ENCODE measurements at regions of chr1 and their contacts with region 1.

Region 1: GRCh38 chr1:180188091-180188506 is 33.4 kb downstream of the QSOX1 start:
- DNase-seq: peak; percentile 87
- H3K4me3 ChIP-seq: peak overlapping the region in 1 of 2 experiments; percentile 40; a peak in 1 of 4 replicates
- H3K27ac ChIP-seq: no peak overlapping the region
- H3K4me1 ChIP-seq: no peaks in the 10 kb centered on the region; a peak in 1 of 4 replicates
- H3K27me3 ChIP-seq: no peaks in the 10 kb centered on the region
- CTCF ChIP-seq: peak; percentile 73
- EP300 ChIP-seq: no peak
- RAD21 ChIP-seq: peak; percentile 87

Region 2: DNA sequence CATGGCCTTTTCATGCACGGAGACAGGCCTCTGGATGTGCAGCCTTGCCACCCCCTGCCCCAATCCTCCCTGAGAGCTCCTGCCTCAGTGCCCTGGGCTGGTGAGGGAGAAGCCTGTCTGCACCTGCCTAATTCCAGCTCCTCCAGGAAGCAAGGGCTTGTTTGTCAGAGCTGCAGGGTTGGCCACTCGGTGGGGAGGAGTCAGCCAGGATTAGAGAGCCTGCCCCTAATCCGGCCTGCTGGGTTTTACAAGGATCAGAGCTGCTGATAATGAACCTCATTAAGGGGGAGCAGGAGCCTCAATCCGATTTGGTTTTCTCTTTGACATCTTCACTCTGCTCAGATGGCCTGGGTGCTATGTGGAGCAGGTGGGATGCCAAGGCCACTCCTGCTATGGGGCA is 10.1 kb after region 1 on chr1:
- CTCF ChIA-PET with region 1: interaction called, 18 read pairs
- POLR2A ChIA-PET with region 1: no interaction called
- DNase-seq: no peak
- H3K4me3 ChIP-seq: no peak overlapping the region
- H3K27ac ChIP-seq: no peak overlapping the region
- H3K4me1 ChIP-seq: no peaks in the 10 kb centered on the region; a peak in 1 of 4 replicates
- H3K27me3 ChIP-seq: no peaks in the 10 kb centered on the region
- CTCF ChIP-seq: no peak
- EP300 ChIP-seq: no peak
- RAD21 ChIP-seq: no peak

Region 3: DNA sequence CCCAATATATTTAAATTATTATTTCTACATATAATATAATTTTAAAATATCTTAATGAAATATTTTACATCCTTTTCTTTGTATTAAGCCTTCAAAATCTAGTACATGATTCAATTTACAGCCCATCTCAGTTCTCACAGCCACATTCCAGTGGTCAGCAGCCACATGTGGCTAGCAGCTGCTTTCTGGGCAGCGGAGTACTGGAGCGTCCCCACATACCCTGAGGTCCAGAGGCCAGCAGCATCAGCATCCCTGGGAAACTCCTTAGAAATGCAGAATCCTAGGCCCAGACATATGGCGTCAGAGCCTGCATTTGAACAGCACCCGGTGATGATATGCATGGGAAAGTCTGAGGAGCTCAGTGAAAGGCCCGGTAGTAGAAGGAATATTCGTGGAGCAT is 33.4 kb after region 1 on chr1:
- CTCF ChIA-PET with region 1: interaction called, 16 read pairs
- POLR2A ChIA-PET with region 1: no interaction called
- DNase-seq: no peak
- H3K4me3 ChIP-seq: no peak overlapping the region
- H3K27ac ChIP-seq: no peak overlapping the region
- H3K4me1 ChIP-seq: no peaks in the 10 kb centered on the region
- H3K27me3 ChIP-seq: peaks cover 29% of the 10 kb centered on the region
- CTCF ChIP-seq: no peak
- EP300 ChIP-seq: no peak
- RAD21 ChIP-seq: no peak

Region 4: DNA sequence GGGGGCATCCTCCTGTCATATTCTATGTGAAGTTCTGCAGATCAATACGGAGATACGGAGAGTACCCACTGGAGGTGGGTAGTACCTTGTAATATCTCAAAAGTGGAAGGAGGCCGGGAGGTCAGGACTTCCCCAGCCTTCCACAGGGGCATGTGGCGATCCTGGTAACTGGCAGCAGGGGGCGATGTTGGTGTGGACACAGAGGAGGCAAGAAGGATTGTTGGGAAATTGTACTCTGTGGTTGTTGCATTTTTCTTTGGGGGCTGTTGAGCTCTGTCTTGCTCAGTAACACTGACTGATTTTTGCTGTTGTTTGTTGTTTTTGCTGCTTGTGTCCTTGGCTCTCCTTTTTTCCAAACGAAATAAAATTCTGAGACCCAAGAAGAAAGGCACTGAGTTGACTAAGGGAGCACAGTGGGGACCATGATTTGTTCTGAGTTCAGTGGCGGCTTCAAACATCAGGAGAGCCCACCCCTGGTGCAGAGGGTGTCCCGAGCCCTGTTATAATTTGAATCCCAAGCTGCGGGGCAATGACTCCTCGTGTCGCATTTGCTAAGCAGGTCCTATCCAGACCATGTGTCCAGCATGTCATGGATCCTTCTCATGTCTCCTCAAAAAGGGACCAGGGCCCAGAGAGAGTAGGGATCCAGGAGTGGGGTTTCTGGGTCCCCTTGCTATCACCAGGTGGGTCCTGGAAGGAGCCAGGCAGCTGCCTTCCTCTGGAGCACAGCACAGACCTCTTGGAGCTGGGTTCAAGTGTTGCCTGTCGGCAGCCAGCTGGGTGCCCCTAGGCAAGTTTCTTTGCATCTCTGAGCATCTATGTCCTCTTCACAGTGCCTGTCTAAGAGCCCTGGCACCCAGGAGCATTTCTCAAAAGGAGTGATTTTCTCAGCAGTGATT is 64.8 kb after region 1 on chr1:
- CTCF ChIA-PET with region 1: interaction called, 21 read pairs
- POLR2A ChIA-PET with region 1: no interaction called
- DNase-seq: peak; percentile 81
- H3K4me3 ChIP-seq: no peak overlapping the region; a peak in 1 of 4 replicates
- H3K27ac ChIP-seq: no peak overlapping the region
- H3K4me1 ChIP-seq: peaks cover 0 to 1% of the 10 kb centered on the region in 2 experiments; a peak in 1 of 4 replicates
- H3K27me3 ChIP-seq: no peaks in the 10 kb centered on the region
- CTCF ChIP-seq: peak; percentile 82
- EP300 ChIP-seq: no peak
- RAD21 ChIP-seq: peak; percentile 90

Region 5: DNA sequence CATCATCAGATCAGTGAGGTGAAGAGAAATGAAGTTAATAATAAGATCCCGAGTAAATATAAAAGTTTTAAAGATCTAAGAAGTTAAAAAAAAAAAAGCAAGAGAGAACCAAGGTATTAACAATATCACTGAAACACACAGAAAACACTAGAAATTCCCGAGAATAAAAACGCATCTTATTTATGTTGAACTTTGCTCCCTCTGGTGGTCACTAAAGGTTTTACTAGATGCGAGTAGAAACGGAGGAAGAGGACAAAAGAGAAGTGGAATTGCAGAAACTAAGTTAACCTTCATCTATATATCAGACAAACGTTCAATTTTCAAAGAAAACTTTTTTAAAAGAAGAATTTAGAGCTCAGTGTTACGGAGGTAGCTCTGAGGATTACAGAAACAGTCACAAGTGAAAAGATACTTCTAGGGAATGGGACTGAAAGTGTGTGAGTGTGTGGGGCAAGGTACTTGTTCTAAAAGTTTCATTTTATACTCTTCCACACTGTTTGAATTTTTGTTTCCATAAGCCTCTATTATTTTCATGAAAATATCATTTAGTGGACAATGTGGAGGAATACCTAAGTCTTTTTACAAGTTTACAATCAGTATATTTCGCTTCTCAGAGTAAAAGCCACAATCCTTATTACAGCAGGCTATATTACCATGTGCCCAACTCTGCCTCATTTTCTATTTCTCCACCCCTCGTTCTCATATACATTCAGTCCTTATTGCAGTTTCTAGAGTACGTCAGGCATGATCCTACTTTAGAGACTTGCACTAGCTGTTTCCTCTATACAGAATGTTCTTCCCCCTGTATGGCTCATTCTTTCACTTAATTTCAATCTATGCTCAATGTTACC is 294.6 kb after region 1 on chr1:
- CTCF ChIA-PET with region 1: interaction called, 45 read pairs
- POLR2A ChIA-PET with region 1: no interaction called
- DNase-seq: peak; percentile 37
- H3K4me3 ChIP-seq: peak overlapping the region; percentile 7 to 12; a peak in 2 of 4 replicates
- H3K27ac ChIP-seq: no peak overlapping the region
- H3K4me1 ChIP-seq: no peaks in the 10 kb centered on the region; a peak in 1 of 4 replicates
- H3K27me3 ChIP-seq: no peaks in the 10 kb centered on the region
- CTCF ChIP-seq: peak; percentile 86
- EP300 ChIP-seq: no peak
- RAD21 ChIP-seq: peak; percentile 62